ENCODE measurements at regions of chr9 and their contacts with region 1.

Region 1: GRCh38 chr9:13568841-13569601 is 289.5 kb upstream of the MPDZ start:
- DNase-seq: peak; percentile 13 to 19
- ATAC-seq: peak; percentile 23 to 63 (median 49)
- H3K4me3 ChIP-seq: peak overlapping the region in 8 of 10 donors; percentile 1 to 47 (median 34)
- H3K27ac ChIP-seq: peak overlapping the region; percentile 59 to 94 (median 84)
- H3K4me1 ChIP-seq: peaks cover 6 to 48% (median 39%) of the 10 kb centered on the region in 9 donors
- H3K27me3 ChIP-seq: no peaks in the 10 kb centered on the region
- CTCF ChIP-seq: no peak

Region 2: GRCh38 chr9:12849486-12850004 is 719.5 kb before region 1 on chr9:
- intact Hi-C with region 1: no loop called
- DNase-seq: no peak
- ATAC-seq: no peak
- H3K4me3 ChIP-seq: no peak overlapping the region
- H3K27ac ChIP-seq: no peak overlapping the region
- H3K4me1 ChIP-seq: no peaks in the 10 kb centered on the region
- H3K27me3 ChIP-seq: no peaks in the 10 kb centered on the region
- CTCF ChIP-seq: no peak

Region 3: GRCh38 chr9:13529321-13530104 is 39.5 kb before region 1 on chr9:
- intact Hi-C with region 1: loop called in 1 of 10 experiments (anchors 10 kb)
- DNase-seq: no peak
- ATAC-seq: no peak
- H3K4me3 ChIP-seq: no peak overlapping the region
- H3K27ac ChIP-seq: no peak overlapping the region
- H3K4me1 ChIP-seq: peaks cover 0 to 14% (median 5%) of the 10 kb centered on the region in 9 donors
- H3K27me3 ChIP-seq: no peaks in the 10 kb centered on the region
- CTCF ChIP-seq: no peak